A549 (cell line): ENCODE measurements at regions of chr21 and their contacts with region 1.

Region 1: DNA sequence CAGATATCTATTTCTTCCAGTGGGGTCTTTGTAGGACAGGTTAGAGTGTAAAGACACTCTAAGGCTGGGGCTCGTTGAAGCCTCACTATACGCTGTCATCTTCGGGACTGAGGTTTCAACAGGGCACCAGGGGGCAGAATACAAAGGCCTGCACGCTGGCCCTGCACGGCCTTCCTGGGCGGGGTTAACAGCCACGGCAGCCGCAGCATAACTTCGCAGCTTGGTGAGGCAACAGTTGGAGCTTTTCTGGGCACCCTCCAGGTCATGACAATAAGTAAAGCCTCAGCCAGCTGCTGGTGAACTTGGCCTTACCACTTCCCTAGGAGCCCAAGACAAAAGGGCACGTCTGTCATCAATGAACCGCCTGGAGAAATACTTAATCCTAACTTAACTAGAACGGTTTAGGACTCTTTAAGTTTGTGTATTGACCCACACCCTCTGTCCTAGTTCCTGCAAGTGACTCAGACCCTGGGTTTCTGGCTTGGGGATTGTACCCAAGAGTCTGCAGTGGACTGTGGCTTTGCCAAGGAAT is 2.3 kb upstream of the RUNX1 start:
- DNase-seq: peak; percentile 43 to 79
- ATAC-seq: peak; percentile 93 to 97
- H3K4me3 ChIP-seq: no peak overlapping the region
- H3K27ac ChIP-seq: peak overlapping the region; percentile 62 to 84
- H3K4me1 ChIP-seq: peaks cover 40% of the 10 kb centered on the region
- CTCF ChIP-seq: peak; percentile 51
- EP300 ChIP-seq: no peak
- POLR2A ChIP-seq: no peak
- RAD21 ChIP-seq: peak; percentile 55 to 68

Region 2: GRCh38 chr21:34900376-34900775 is 151.0 kb before region 1 on chr21:
- CTCF ChIA-PET with region 1: interaction called, 10 read pairs
- POLR2A ChIA-PET with region 1: no interaction called
- DNase-seq: no peak
- ATAC-seq: no peak
- H3K4me3 ChIP-seq: no peak overlapping the region
- H3K27ac ChIP-seq: no peak overlapping the region
- H3K4me1 ChIP-seq: no peaks in the 10 kb centered on the region
- CTCF ChIP-seq: no peak
- EP300 ChIP-seq: no peak
- POLR2A ChIP-seq: no peak
- RAD21 ChIP-seq: no peak

Region 3: DNA sequence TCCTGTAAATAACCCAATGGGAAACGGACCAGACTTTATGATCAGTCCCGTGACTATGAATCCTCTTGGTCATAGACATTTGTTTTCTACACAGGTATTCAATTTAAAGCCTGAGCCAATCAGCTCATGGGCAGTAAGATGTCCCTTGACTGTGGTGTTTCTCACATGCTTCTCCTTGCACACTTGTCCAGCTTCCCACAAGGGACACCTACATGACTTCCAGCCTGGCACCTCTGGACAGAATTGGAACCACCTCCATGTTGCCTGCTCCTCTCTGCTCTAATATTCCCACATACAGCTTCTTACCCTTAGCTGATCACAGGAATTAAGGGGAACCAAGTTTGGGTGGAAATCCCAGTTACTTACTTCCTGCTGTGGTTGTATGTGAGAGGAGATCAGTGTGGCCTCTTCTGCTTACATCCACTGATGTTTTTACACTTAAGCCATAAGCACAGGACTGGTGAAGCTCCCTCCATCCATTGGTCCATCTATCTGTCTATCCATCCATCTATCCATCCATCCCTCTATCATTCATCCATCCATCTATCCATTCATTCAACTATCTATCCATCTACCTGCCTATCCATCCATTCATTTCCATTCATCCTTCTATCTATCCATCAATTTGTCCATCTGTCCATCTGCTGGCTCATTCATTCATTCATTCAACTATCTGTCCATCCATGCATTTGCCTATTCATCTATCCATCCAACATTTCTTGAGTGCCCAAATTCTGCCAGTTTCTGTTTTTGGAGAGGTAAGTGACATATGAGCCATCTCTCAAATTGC is 18.7 kb before region 1 on chr21:
- CTCF ChIA-PET with region 1: no interaction called
- POLR2A ChIA-PET with region 1: no interaction called
- DNase-seq: no peak
- ATAC-seq: no peak
- H3K4me3 ChIP-seq: no peak overlapping the region
- H3K27ac ChIP-seq: no peak overlapping the region
- H3K4me1 ChIP-seq: peaks cover under 1% of the 10 kb centered on the region; the same call in 1 of the 3 replicates
- CTCF ChIP-seq: no peak
- EP300 ChIP-seq: no peak
- POLR2A ChIP-seq: no peak
- RAD21 ChIP-seq: no peak

Region 4: DNA sequence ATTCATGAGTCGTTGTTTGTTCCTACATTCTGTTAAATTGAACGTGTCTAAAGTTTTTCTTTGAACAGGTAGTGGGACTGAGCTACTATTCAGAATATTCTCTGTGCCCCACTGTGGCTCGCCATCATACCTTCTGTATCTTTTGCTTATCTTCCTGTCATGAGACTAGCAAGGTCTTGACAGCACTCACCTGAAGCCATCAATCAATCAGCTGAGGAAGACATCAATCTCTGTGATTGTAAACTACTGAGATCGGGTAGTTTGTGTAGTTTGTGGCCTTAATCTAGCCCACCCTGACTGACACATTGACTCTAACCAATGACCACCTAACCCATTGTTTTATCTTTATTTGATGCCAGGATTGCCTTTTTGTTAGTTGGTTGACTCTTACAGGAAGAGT is 15.5 kb after region 1 on chr21:
- CTCF ChIA-PET with region 1: interaction called, 11 read pairs
- POLR2A ChIA-PET with region 1: no interaction called
- DNase-seq: no peak
- ATAC-seq: no peak
- H3K4me3 ChIP-seq: no peak overlapping the region
- H3K27ac ChIP-seq: no peak overlapping the region
- H3K4me1 ChIP-seq: no peaks in the 10 kb centered on the region
- CTCF ChIP-seq: no peak
- EP300 ChIP-seq: no peak
- POLR2A ChIP-seq: no peak
- RAD21 ChIP-seq: no peak

Region 5: GRCh38 chr21:35400233-35400957 is 349.0 kb after region 1 on chr21:
- CTCF ChIA-PET with region 1: interaction called, 21 read pairs
- POLR2A ChIA-PET with region 1: interaction called, 3 read pairs
- DNase-seq: peak; percentile 5 to 65
- ATAC-seq: peak; percentile 75 to 85
- H3K4me3 ChIP-seq: no peak overlapping the region
- H3K27ac ChIP-seq: no peak overlapping the region
- H3K4me1 ChIP-seq: peaks cover 5% of the 10 kb centered on the region; the same call in 1 of the 3 replicates
- CTCF ChIP-seq: peak; percentile 63
- EP300 ChIP-seq: no peak
- POLR2A ChIP-seq: no peak
- RAD21 ChIP-seq: peak; percentile 83 to 87